Left cardiac atrium (tissue), 4 donors: ENCODE measurements at regions of chr3 and their contacts with region 1.

Region 1: DNA sequence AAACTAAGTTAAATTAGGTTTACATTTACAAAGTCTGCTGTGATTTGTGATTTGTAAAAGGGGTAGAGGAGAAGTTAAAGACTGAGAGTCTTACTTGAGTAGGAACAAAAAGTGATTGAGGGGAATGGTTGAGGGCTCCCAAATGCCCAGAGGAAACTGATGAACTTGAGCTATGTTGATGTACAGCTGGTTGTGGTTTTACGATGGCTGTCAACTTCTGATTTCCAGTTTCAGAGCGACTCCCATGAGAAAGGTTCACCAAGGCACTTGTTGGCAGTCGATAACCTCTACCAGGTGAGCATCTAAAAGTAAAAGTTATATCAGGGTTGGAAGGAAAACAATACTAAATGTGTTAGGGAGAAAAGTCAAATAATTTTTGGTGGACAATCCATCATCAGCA is 91.0 kb downstream of the XRN1 start:
- DNase-seq: no peak
- ATAC-seq: no peak

Region 2: DNA sequence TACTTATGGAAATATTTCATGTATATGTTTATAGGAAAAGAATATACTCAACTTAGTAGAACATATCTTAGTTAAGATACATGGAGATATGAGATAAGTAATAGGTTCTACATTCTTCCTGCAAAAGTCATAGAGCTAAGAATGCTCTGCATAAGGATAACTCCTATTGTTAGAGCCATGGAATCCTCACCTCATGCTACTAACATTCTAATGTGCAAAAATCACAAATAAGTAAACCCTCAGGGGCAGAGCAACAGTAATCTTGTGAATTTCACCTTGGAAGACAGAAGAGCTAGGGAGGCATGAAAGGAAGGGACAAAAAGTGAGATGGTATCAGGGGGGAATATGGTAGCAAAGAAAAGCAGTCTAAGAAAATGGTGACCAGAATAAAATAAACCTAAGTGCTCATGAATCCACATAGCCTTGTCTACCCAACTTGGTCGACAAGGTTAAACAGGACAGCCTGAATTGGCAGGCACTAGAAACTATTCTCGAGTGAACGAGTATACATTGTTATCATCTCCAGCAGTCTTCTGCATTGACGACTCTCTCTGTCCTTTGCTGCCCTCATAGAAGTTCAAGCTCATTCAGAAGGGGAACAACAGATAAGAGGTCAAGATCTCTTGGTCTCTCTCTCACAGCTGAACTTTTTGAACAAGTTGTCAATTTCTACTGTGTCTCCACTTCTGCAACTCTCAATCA is 38.3 kb after region 1 on chr3:
- intact Hi-C with region 1: loop called in 1 of 2 experiments (anchors 10 kb)
- DNase-seq: no peak
- ATAC-seq: no peak